ENCODE measurements at regions of chr7 and their contacts with region 1.

Region 1: GRCh38 chr7:73423519-73424488 is 9.8 kb upstream of the FZD9 start:
- DNase-seq: no peak
- H3K4me3 ChIP-seq: no peak overlapping the region
- H3K27ac ChIP-seq: no peak overlapping the region
- H3K4me1 ChIP-seq: no peaks in the 10 kb centered on the region
- H3K27me3 ChIP-seq: no peaks in the 10 kb centered on the region
- CTCF ChIP-seq: no peak

Region 2: GRCh38 chr7:73312831-73313526 is 110.8 kb before region 1 on chr7:
- CTCF ChIA-PET with region 1: interaction called, 14 read pairs
- POLR2A ChIA-PET with region 1: no interaction called
- intact Hi-C with region 1: no loop called
- DNase-seq: no peak
- H3K4me3 ChIP-seq: no peak overlapping the region
- H3K27ac ChIP-seq: no peak overlapping the region
- H3K4me1 ChIP-seq: peaks cover 5% of the 10 kb centered on the region
- H3K27me3 ChIP-seq: no peaks in the 10 kb centered on the region
- CTCF ChIP-seq: no peak

Region 3: GRCh38 chr7:73364006-73364728 is 59.6 kb before region 1 on chr7:
- CTCF ChIA-PET with region 1: no interaction called
- POLR2A ChIA-PET with region 1: no interaction called
- intact Hi-C with region 1: no loop called
- DNase-seq: no peak
- H3K4me3 ChIP-seq: no peak overlapping the region
- H3K27ac ChIP-seq: no peak overlapping the region
- H3K4me1 ChIP-seq: no peaks in the 10 kb centered on the region
- H3K27me3 ChIP-seq: peaks cover 16% of the 10 kb centered on the region
- CTCF ChIP-seq: no peak